Spleen (tissue), 13 donors: ENCODE measurements at regions of chr22 and their contacts with region 1.

Region 1: DNA sequence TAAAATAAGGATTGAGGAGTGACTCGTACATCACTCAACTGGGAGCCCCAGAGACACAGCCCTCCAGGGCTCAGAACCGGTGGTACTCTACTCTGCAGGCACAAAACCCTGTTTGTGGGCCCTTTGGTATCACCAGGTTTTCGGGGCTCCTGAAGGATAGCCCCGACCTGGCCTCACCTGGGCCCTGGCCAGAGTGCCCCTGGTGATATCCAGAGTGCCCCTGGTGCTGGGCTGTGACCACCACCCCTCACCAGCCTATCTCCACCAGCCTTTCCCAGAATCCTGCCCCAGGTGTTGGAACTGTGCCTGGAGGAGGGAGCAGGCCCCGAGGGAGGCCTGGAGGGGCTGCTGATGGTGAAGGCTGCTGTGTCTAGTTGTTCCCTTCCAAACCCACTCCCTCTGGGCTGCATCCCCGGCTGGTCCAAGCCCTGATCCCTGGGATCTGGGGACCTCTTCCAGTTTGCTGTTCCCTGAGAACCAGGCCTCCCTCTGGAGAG is 2.2 kb upstream of the GGT5 start:
- DNase-seq: peak; percentile 59
- H3K4me3 ChIP-seq: no peak overlapping the region
- H3K27ac ChIP-seq: peak overlapping the region; percentile 57 to 85 (median 75)
- H3K4me1 ChIP-seq: peaks cover 19 to 55% (median 34%) of the 10 kb centered on the region in 6 donors
- H3K27me3 ChIP-seq: no peaks in the 10 kb centered on the region
- CTCF ChIP-seq: no peak
- POLR2A ChIP-seq: no peak

Region 2: DNA sequence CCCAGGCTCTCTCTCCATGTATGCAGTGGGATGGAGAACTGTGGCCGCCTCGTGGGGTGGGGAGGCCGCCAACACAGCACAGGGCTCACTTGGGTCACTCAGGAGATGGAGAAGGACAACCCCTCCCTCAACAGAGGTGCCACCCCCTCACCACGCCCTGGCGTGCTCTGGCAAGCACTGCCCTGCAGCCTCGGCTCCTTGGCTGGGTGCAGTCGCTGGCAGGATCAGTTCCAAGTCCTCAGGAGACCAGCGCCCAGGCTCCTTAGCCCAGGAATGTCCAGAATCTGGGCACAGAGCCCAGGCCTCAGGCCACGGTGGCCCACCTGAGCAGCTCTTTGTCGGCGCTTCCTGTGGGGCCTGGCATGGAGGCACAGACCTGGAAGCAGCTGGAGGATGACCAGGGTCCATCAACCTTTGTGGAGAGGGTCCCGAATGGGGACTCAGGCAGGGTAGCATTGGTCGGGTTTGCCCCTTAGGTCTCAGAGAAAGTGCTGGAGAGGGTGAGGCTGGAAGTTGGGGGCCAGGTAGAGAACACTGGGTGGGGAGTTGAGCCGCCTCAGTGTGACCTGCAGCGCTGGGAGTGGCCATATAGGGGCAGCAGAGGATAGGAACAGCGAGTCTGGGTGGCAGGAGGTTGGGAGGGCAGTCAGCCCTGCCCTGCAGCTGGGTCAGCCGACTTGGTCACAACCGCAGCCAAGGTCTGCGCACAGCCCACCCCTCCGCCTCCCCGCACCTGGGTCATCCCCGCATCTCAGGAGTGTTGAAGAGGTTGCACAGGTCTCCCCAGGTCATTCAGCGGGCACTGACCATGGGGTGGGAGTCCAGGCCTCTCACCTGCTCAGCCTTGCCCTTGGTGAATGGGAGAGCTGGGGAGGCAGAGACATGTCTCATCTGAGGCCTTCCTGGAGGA is 57.6 kb before region 1 on chr22:
- intact Hi-C with region 1: loop called (anchors 5 kb)
- DNase-seq: peak; percentile 90
- H3K4me3 ChIP-seq: no peak overlapping the region
- H3K27ac ChIP-seq: peak overlapping the region in 1 of 8 donors; percentile 35
- H3K4me1 ChIP-seq: peaks cover 0 to 24% (median 10%) of the 10 kb centered on the region in 6 donors
- H3K27me3 ChIP-seq: no peaks in the 10 kb centered on the region
- CTCF ChIP-seq: peak; percentile 74 to 97 (median 88)
- POLR2A ChIP-seq: no peak